IMR-90 (cell line): ENCODE measurements at regions of chr17 and their contacts with region 1.

Region 1: GRCh38 chr17:44864866-44865660 is 17.4 kb downstream of the HIGD1B start:
- DNase-seq: peak; percentile 73
- ATAC-seq: peak; percentile 89
- H3K4me3 ChIP-seq: no peak overlapping the region
- H3K27ac ChIP-seq: no peak overlapping the region
- H3K4me1 ChIP-seq: no peaks in the 10 kb centered on the region
- H3K27me3 ChIP-seq: no peaks in the 10 kb centered on the region
- CTCF ChIP-seq: peak; percentile 89
- POLR2A ChIP-seq: no peak
- RAD21 ChIP-seq: peak; percentile 82

Region 2: DNA sequence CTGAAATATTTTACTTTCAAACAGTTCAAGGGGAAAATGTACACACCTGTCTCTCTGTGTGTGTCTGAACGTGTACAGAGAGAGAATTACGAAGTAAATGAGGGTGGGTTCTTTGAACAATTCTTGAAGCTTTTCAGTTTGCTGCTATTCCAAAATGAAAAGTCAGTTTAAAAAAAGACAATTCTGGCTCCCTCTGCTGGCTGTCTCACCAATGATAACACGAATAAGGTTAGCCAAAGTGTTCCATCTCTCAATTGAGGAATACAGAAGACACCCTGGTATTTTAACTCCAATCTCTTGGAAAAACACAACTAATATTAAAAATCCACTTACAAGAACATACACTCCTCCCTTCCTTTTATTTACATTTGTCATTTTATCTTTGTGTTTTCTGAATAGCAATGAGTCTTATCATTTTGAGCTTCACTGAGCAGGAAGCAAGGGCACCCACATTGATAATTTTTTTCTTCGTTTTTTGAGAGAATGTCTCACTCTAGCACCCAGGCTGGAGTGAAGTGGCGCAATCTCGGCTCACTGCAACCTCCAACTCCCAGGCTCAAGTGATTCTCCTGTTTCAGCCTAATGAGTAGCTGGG is 13.7 kb after region 1 on chr17:
- CTCF ChIA-PET with region 1: interaction called, 18 read pairs
- POLR2A ChIA-PET with region 1: no interaction called
- dilution Hi-C with region 1: no loop called
- in situ Hi-C with region 1: no loop called
- intact Hi-C with region 1: loop called (anchors 1 kb)
- DNase-seq: peak; percentile 38
- ATAC-seq: peak; percentile 48; the same call in 1 of the 2 replicates
- H3K4me3 ChIP-seq: no peak overlapping the region
- H3K27ac ChIP-seq: no peak overlapping the region
- H3K4me1 ChIP-seq: no peaks in the 10 kb centered on the region
- H3K27me3 ChIP-seq: no peaks in the 10 kb centered on the region
- CTCF ChIP-seq: peak; percentile 66
- POLR2A ChIP-seq: no peak
- RAD21 ChIP-seq: peak; percentile 51